ENCODE measurements at regions of chr3 and their contacts with region 1.

Region 1: DNA sequence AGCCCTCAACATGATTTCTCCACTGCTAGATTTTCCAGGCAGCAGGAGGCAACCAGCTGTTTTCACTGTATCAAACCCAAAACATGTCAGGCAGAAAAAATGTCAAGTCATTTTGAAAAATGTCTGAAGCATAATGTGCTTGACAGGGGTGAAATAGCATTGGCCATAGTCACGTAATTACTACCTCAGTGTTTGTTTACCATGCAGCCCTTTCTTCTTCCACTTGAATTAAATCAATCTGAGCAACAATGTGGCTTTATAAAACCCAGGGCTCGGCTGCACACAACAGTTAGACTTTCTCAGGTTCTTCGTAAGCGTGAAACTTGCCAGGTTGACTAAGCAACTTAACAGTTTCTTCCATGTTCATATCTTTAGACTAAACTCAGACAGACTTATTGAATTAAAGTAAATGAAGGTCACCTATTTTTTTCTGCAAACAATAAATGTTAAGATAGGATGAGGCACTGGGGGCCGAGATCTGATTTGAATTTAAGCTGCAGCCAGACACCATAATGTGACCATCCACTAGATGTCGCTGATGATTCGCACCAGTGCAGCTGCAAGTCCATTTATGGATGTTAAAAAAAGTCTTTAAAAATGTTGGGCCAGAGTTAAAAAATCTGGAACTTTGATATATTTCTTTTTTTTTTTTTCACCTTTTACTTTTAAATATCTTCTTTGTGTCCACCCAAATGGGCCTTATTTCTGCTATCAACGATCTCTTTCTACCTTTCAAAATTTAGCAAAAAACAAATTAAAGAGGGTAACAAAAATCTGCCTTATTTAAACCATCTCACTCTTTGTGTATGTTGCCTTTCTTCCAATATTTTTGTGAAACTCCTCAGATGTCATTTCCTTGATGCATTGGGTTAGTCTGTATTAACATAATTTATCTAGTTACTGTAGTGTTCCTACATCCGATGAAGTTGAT is 305.9 kb downstream of the CACNA2D3 start:
- DNase-seq: peak; percentile 26
- H3K4me3 ChIP-seq: no peak overlapping the region
- H3K27ac ChIP-seq: no peak overlapping the region
- H3K4me1 ChIP-seq: no peaks in the 10 kb centered on the region
- H3K27me3 ChIP-seq: no peaks in the 10 kb centered on the region
- CTCF ChIP-seq: peak; percentile 86 to 90

Region 2: GRCh38 chr3:53938645-53939044 is 489.6 kb before region 1 on chr3:
- CTCF ChIA-PET with region 1: no interaction called
- dilution Hi-C with region 1: no loop called
- in situ Hi-C with region 1: loop called in 1 of 2 experiments (anchors 25 kb)
- intact Hi-C with region 1: loop called (anchors 5 kb)
- DNase-seq: peak; percentile 35
- H3K4me3 ChIP-seq: no peak overlapping the region
- H3K27ac ChIP-seq: no peak overlapping the region
- H3K4me1 ChIP-seq: peaks cover 10% of the 10 kb centered on the region
- H3K27me3 ChIP-seq: no peaks in the 10 kb centered on the region
- CTCF ChIP-seq: peak; percentile 80 to 82

Region 3: GRCh38 chr3:54538346-54538745 is 110.1 kb after region 1 on chr3:
- CTCF ChIA-PET with region 1: interaction called, 15 read pairs
- dilution Hi-C with region 1: no loop called
- in situ Hi-C with region 1: no loop called
- intact Hi-C with region 1: loop called (anchors 5 kb)
- DNase-seq: peak; percentile 7
- H3K4me3 ChIP-seq: no peak overlapping the region
- H3K27ac ChIP-seq: no peak overlapping the region
- H3K4me1 ChIP-seq: no peaks in the 10 kb centered on the region
- H3K27me3 ChIP-seq: no peaks in the 10 kb centered on the region
- CTCF ChIP-seq: peak; percentile 34 to 38

Region 4: DNA sequence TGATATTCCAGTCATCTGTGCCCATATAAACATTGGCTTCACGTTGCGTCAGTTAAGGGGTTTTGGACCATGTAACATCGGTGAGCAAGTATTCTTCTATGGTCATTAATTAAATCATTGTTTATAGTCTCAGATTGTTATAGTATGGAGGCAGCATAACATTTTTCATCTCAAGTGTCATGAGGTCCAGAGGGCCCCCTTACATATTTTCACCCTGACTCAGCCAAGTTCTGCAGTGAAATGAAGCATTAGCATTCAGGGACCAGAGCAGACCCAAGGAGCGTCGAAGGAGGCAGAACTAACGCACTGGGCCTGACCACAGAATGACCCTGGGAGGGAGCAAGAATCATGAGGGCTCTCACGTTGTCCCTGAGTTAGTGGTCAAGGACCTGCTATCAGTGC is 328.1 kb after region 1 on chr3:
- CTCF ChIA-PET with region 1: no interaction called
- dilution Hi-C with region 1: no loop called
- in situ Hi-C with region 1: no loop called
- intact Hi-C with region 1: no loop called
- DNase-seq: no peak
- H3K4me3 ChIP-seq: no peak overlapping the region
- H3K27ac ChIP-seq: no peak overlapping the region
- H3K4me1 ChIP-seq: no peaks in the 10 kb centered on the region
- H3K27me3 ChIP-seq: no peaks in the 10 kb centered on the region
- CTCF ChIP-seq: no peak

Region 5: DNA sequence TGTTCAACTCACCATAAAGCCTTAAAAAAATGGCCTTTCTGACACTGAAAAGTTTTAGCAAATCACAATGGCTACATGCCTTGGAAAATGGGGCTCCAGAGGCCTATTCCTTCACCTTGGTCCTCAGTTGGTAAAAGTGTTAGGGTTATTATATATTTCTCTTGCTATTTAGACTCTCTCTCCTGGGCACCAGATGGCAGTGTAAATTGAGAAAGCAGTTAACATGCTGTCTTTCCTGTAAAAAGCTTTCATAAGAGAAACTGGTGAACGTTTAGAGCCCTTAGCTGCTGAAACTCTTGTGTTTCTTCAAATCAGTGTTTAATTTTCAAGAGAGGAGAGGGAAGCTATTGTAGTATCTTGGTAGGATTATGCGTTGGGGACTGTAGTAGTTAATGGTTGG is 409.8 kb after region 1 on chr3:
- CTCF ChIA-PET with region 1: no interaction called
- dilution Hi-C with region 1: no loop called
- in situ Hi-C with region 1: loop called in 1 of 2 experiments (anchors 25 kb)
- intact Hi-C with region 1: loop called (anchors 5 kb)
- DNase-seq: no peak
- H3K4me3 ChIP-seq: no peak overlapping the region
- H3K27ac ChIP-seq: no peak overlapping the region
- H3K4me1 ChIP-seq: peaks cover 3% of the 10 kb centered on the region
- H3K27me3 ChIP-seq: no peaks in the 10 kb centered on the region
- CTCF ChIP-seq: peak; percentile 5 to 39

Region 6: DNA sequence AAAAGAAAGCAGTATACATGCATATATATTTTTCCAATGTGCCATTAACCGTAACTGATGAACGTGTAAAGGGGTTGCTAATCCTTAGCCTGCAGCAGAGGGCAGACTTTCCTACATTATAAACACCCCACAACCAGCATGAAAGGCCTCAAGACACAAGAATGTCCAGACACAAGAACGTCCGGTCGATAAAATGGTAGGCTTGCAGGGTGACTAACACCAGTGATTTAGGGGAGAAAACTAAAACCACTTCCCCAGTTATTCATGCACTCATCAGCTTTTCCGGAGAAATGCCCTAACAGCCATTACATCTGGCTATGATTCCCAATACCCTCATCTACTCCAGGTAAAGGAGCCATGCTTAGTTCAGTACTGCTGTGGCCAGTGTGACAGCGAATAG is 442.2 kb after region 1 on chr3:
- CTCF ChIA-PET with region 1: no interaction called
- dilution Hi-C with region 1: no loop called
- in situ Hi-C with region 1: no loop called
- intact Hi-C with region 1: loop called (anchors 1 kb)
- DNase-seq: peak; percentile 69
- H3K4me3 ChIP-seq: no peak overlapping the region
- H3K27ac ChIP-seq: no peak overlapping the region
- H3K4me1 ChIP-seq: no peaks in the 10 kb centered on the region
- H3K27me3 ChIP-seq: no peaks in the 10 kb centered on the region
- CTCF ChIP-seq: peak; percentile 52 to 66

Region 7: DNA sequence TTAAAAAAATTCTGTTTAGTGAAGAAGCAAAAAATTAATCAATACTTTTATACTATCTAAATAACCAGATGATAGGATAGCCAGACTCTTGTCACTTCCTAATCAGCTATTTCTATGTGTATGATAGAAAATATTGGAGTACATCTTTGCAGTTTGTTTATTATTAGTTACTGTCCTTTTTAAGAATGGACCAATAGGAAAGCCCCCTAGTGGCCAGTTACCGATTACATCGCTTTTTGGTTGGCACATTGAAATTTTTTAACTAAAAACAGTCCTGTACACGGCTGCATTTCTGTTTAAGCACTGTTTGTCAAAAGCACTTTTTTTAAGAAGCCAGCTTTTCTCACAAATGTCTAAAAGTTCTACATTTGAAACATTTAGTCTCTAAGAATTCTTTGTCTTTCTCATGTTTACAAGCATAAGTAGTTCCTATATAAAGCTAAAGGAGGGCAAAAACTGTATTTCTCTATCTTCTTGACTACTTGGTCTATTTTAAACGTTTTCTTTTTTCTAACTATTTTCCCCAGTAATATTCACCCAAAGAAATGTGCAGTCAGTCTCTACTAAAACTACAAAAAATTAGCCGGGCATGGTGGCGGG is 752.8 kb after region 1 on chr3:
- CTCF ChIA-PET with region 1: no interaction called
- dilution Hi-C with region 1: no loop called
- in situ Hi-C with region 1: no loop called
- intact Hi-C with region 1: loop called (anchors 5 kb)
- DNase-seq: no peak
- H3K4me3 ChIP-seq: no peak overlapping the region
- H3K27ac ChIP-seq: no peak overlapping the region
- H3K4me1 ChIP-seq: no peaks in the 10 kb centered on the region
- H3K27me3 ChIP-seq: no peaks in the 10 kb centered on the region
- CTCF ChIP-seq: peak; percentile 69 to 75

Region 8: DNA sequence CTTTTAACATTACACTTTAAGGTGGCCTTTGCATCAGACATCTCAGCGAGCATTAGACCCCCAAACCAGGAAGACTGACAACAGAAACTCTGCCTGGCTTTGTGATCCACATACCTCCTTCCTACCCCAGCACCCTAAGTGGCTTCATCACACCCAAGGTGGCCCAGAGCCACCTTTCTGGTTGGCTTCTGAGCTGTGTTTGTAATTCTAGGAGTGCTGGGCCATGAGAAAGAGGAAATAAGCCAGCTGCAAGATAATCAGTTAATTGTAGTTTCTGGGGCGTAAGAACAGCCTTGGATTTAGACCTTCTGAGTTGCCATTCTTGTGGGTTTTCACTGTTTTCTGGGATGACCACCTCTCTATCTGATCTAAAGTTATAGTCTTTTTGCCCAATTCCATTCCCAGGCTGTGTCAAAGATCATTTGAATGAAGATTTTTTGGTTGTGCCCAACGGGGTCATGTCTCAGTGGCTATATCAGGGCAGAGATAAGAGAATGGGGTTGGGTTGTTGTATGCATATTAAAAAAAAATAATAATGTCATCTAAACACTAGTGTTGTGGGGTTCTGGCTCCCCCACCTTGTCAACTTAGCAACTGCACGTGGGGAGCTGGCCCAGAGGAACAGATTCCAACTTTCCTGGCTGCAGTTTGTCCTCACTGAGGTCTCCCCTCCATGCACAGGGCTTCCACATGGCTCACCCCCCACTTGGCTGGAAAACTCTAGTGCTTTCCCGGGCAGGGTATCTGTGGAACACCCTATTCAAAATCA is 1293.7 kb after region 1 on chr3:
- CTCF ChIA-PET with region 1: interaction called, 6 read pairs
- dilution Hi-C with region 1: no loop called
- in situ Hi-C with region 1: no loop called
- intact Hi-C with region 1: loop called (anchors 5 kb)
- DNase-seq: peak; percentile 27
- H3K4me3 ChIP-seq: no peak overlapping the region
- H3K27ac ChIP-seq: no peak overlapping the region
- H3K4me1 ChIP-seq: no peaks in the 10 kb centered on the region
- H3K27me3 ChIP-seq: peaks cover 4% of the 10 kb centered on the region
- CTCF ChIP-seq: peak; percentile 73 to 76

Measured in mammary epithelial cell (primary cell).